ENCODE measurements at regions of chr17 and their contacts with region 1.

Region 1: DNA sequence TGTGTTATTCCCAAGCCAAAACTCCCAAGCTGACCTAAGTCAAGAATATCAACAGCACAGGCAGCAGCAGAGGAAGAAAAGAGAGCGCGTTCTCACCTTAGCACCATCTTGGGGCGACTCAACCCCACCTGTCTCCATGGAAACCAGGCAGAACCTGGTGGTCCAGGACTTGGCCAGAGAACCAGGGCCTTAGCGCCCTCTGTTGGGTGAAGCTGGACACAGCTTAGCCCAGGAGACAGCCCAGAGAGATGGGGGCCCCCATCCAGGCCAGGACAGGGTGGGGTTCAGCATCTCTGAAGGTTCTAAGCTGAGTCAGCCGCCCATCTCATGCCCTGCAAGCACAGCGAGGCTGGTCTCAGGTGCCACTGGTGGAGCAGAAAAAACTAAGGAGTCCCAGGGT is 60.1 kb upstream of the TMEM132E start:
- DNase-seq: no peak
- ATAC-seq: no peak
- H3K4me3 ChIP-seq: no peak overlapping the region
- H3K27ac ChIP-seq: no peak overlapping the region
- H3K4me1 ChIP-seq: no peaks in the 10 kb centered on the region
- H3K27me3 ChIP-seq: peaks cover 0 to 34% (median 13%) of the 10 kb centered on the region in 9 donors
- CTCF ChIP-seq: peak in 11 of 12 donors; percentile 12 to 55 (median 40)
- POLR2A ChIP-seq: no peak

Region 2: GRCh38 chr17:34451313-34451712 is 68.0 kb before region 1 on chr17:
- intact Hi-C with region 1: loop called in 2 of 10 experiments (anchors 5 to 10 kb)
- DNase-seq: no peak
- ATAC-seq: no peak
- H3K4me3 ChIP-seq: no peak overlapping the region
- H3K27ac ChIP-seq: no peak overlapping the region
- H3K4me1 ChIP-seq: no peaks in the 10 kb centered on the region
- H3K27me3 ChIP-seq: peaks cover 0 to 27% (median 7%) of the 10 kb centered on the region in 9 donors
- CTCF ChIP-seq: no peak
- POLR2A ChIP-seq: no peak

Region 3: DNA sequence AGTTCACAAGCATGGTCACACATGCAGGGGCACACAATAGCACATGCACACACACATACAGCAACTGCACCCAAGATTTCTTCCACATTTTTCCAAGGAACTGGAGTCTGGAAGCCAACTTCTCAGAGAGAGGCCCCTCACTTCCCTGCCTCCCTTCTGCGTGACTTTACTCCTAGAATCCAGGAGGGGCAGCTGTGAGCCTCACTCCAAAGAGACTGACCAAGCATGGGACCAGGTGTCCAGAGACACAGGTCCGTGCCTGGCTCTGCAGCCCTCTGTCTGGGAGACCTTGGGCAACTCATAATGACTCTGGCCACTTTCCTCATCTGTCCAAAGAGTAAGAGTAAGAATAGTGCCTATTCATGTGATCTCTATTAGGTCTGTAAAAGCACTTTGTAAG is 44.6 kb before region 1 on chr17:
- intact Hi-C with region 1: no loop called
- DNase-seq: no peak
- ATAC-seq: no peak
- H3K4me3 ChIP-seq: no peak overlapping the region
- H3K27ac ChIP-seq: no peak overlapping the region
- H3K4me1 ChIP-seq: no peaks in the 10 kb centered on the region
- H3K27me3 ChIP-seq: peaks cover 0 to 21% (median 2%) of the 10 kb centered on the region in 9 donors
- CTCF ChIP-seq: no peak
- POLR2A ChIP-seq: no peak

Measured in heart left ventricle (tissue), 16 donors.